Heart right ventricle (tissue), 16 donors: ENCODE measurements at regions of chr10 and their contacts with region 1.

Region 1: GRCh38 chr10:1679821-1680650 is 57.3 kb downstream of the ADARB2 start:
- DNase-seq: no peak
- ATAC-seq: no peak
- H3K4me3 ChIP-seq: no peak overlapping the region
- H3K27ac ChIP-seq: no peak overlapping the region
- H3K4me1 ChIP-seq: no peaks in the 10 kb centered on the region
- H3K27me3 ChIP-seq: peaks cover 0 to 28% (median 5%) of the 10 kb centered on the region in 7 donors
- CTCF ChIP-seq: no peak

Region 2: GRCh38 chr10:1739751-1740150 is 59.7 kb after region 1 on chr10:
- intact Hi-C with region 1: loop called in 1 of 10 experiments (anchors 10 kb)
- DNase-seq: no peak
- ATAC-seq: no peak
- H3K4me3 ChIP-seq: no peak overlapping the region
- H3K27ac ChIP-seq: no peak overlapping the region
- H3K4me1 ChIP-seq: peaks cover 0 to 18% (median 9%) of the 10 kb centered on the region in 9 donors
- H3K27me3 ChIP-seq: peaks cover 0 to 99% (median 73%) of the 10 kb centered on the region in 7 donors
- CTCF ChIP-seq: no peak